HAP-1 (cell line): ENCODE measurements at regions of chr1 and their contacts with region 1.

Region 1: GRCh38 chr1:245045087-245045881 is 109.5 kb upstream of the KIF26B start:
- DNase-seq: no peak
- H3K4me3 ChIP-seq: no peak overlapping the region
- H3K4me1 ChIP-seq: 0 out of 2 replicates have a peak, but pooled peaks cover 3% of the 10 kb centered on the region
- H3K27me3 ChIP-seq: no peaks in the 10 kb centered on the region

Region 2: GRCh38 chr1:244599937-244600350 is 445.3 kb before region 1 on chr1:
- in situ Hi-C with region 1: loop called (anchors 10 kb)
- DNase-seq: no peak
- H3K4me3 ChIP-seq: no peak overlapping the region
- H3K4me1 ChIP-seq: no peaks in the 10 kb centered on the region
- H3K27me3 ChIP-seq: no peaks in the 10 kb centered on the region

Region 3: GRCh38 chr1:244864253-244865027 is 180.8 kb before region 1 on chr1 and contains the start of gene HNRNPU:
- in situ Hi-C with region 1: loop called (anchors 25 kb)
- DNase-seq: peak; percentile 91 to 96
- H3K4me3 ChIP-seq: peak within 1 kb of the TSS; percentile 95
- H3K4me1 ChIP-seq: peaks cover 22% of the 10 kb centered on the region
- H3K27me3 ChIP-seq: no peaks in the 10 kb centered on the region